Mammary epithelial cell (primary cell): ENCODE measurements at regions of chr11 and their contacts with region 1.

Region 1: DNA sequence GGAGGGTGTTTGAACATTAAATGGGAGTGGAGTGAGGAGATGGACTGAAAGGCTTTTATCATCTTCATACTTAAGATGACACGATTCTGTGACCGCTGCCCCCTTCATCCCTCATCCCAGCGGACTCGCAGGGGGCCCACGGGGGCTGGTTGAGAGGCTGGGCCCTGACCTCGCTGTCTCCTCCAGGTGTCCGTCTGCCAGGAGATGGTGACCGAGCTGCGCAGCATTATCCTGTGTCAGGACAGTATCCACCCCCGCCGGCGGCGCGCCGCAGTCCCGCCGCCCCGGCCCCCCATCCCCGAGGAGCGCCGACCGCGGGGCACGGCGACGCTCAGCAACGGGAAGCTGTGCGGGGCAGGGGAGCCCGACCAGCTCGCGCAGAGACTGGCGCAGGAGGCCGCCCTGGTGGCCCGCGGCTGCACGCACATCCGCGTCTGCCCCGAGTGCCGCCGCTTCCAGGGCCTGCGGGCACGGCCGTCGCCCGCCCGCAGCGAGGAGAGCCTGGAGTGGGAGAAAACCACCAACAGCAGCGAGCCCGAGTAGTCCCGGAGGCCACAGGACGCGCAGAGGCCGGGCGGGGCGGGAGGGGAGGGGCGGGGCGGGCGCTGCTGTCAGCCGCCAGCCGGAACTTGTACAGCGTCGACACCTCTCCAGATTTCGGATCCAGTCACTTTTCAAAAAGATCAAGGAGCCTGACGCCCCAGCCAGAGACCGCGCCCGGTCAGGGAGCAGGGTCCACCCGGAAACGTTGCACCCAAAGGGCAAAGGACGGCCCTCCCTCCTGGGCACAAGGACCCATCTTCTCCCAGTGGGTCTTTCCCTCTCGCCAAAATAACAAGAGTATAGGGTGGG is 38.0 kb upstream of the TBCEL start:
- DNase-seq: peak; percentile 34
- H3K4me3 ChIP-seq: peak overlapping the region; percentile 21 to 51 (median 43)
- H3K27ac ChIP-seq: no peak overlapping the region
- H3K4me1 ChIP-seq: peaks cover 4% of the 10 kb centered on the region
- H3K27me3 ChIP-seq: peaks cover 4% of the 10 kb centered on the region
- CTCF ChIP-seq: peak in 1 of 2 donors; percentile 33

Region 2: GRCh38 chr11:120759046-120759445 is 226.9 kb before region 1 on chr11:
- CTCF ChIA-PET with region 1: interaction called, 10 read pairs
- dilution Hi-C with region 1: no loop called
- in situ Hi-C with region 1: no loop called
- intact Hi-C with region 1: no loop called
- DNase-seq: no peak
- H3K4me3 ChIP-seq: no peak overlapping the region
- H3K27ac ChIP-seq: no peak overlapping the region
- H3K4me1 ChIP-seq: no peaks in the 10 kb centered on the region
- H3K27me3 ChIP-seq: peaks cover 2% of the 10 kb centered on the region
- CTCF ChIP-seq: no peak